Pancreas (tissue), 10 donors: ENCODE measurements at regions of chr7 and their contacts with region 1.

Region 1: DNA sequence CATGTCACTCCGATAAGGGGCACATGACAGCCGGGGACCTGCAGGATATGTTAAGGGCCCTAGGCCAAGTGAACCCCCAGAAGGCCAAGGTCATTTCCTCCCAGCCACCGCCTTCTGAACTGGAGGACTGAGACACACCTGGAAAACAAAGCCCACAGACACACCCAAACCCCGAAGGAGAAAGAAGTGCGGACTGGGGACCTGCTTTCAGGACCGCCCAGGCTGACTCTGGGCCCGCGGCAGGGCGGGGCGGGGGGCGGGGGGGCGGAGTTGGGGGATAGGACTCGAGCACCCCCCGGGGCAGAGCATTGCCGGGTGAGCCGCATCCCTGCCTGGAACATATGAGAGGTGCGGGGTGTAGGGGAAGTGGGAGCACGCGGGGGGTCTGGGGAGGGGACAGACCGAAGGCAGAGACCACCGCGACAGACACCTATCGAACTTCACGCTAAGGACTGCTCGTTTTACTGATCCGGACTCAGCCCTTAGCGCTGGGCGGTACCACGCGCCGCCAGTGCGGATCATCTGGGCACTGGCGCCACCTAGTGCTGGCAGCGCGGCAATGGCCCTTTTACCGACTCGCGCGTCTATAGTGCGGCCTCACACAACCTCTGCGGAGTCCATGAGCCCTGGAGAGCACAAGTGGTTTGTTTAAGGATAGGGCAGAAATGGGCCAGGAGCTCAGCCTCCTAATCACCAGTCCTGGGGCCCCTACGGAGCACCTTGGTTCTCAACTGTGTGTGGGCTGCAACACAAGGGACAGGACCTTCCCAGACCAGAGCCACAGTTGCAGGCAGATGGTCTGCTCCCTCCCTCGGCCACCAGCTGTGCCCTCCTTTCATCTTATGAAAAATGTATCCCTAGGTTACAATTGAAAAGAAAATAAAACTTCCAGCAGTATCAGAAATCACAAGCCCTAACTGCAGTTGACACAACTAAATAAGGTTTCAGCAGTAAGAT is 157.6 kb downstream of the HERPUD2 start:
- DNase-seq: peak; percentile 58 to 94 (median 84)
- ATAC-seq: peak; percentile 99 to 100 (median 100)
- H3K4me3 ChIP-seq: peak overlapping the region in 3 of 4 donors; percentile 31 to 49 (median 39)
- H3K27ac ChIP-seq: no peak overlapping the region
- H3K4me1 ChIP-seq: no peaks in the 10 kb centered on the region
- H3K27me3 ChIP-seq: no peaks in the 10 kb centered on the region
- CTCF ChIP-seq: peak; percentile 84 to 91 (median 88)

Region 2: DNA sequence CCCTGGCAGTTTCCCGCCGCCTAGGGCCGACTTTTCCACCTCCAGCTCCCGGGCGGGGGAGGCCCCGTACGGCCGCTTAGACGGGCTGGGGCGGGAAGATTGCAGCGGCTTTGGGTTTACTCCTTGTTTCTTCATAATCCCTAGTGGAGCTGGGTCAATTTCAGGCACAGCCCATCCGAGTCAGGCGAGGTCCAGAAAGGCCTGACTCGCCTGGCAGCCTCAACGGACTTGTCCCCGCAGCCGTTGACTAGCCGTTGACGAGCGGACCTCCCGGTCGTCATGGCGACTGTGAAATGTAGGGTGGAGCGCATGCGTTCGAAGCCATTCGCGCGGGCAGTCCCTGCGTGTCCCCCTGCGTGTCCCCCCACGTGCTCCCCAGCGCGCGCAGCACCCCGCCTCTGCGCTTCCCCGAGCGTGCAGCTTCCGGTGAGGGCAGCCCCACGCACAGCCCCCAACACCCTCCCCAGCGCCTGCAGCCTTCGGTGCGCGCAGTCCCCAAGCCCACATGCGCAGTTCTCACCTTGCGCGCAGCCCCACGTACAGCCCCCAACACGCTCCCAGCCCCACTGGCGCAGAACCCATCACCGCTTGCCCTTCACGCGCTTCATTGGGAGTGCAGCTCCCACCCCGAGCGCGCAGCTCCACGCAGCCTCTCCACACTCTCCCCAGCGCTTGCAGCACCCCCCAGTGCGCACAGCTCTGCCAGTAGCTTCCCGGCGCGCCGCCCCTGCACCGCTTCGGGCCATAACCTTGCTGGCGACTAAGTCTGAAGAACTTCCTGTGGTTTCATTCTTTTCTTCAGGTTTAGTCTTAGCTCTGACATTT is 351.2 kb before region 1 on chr7:
- intact Hi-C with region 1: loop called in 1 of 3 experiments (anchors 10 kb)
- DNase-seq: peak; percentile 10 to 71 (median 18)
- ATAC-seq: peak; percentile 53 to 83 (median 70)
- H3K4me3 ChIP-seq: peak overlapping the region in 3 of 4 donors; percentile 14 to 47 (median 29)
- H3K27ac ChIP-seq: no peak overlapping the region
- H3K4me1 ChIP-seq: no peaks in the 10 kb centered on the region
- H3K27me3 ChIP-seq: peaks cover 0 to 5% (median 0%) of the 10 kb centered on the region in 4 donors
- CTCF ChIP-seq: no peak

Region 3: GRCh38 chr7:35424869-35425495 is 112.4 kb before region 1 on chr7:
- intact Hi-C with region 1: loop called in 1 of 3 experiments (anchors 10 kb)
- DNase-seq: peak; percentile 32 to 74 (median 64)
- ATAC-seq: peak; percentile 50 to 94 (median 91)
- H3K4me3 ChIP-seq: no peak overlapping the region
- H3K27ac ChIP-seq: no peak overlapping the region
- H3K4me1 ChIP-seq: no peaks in the 10 kb centered on the region
- H3K27me3 ChIP-seq: peaks cover 0 to 5% (median 0%) of the 10 kb centered on the region in 4 donors
- CTCF ChIP-seq: peak; percentile 52 to 76 (median 68)

Region 4: GRCh38 chr7:35753761-35754603 is 216.6 kb after region 1 on chr7:
- intact Hi-C with region 1: no loop called
- DNase-seq: peak in 2 of 6 donors; percentile 5 to 9
- ATAC-seq: peak in 3 of 4 donors; percentile 45 to 58 (median 47)
- H3K4me3 ChIP-seq: no peak overlapping the region
- H3K27ac ChIP-seq: no peak overlapping the region
- H3K4me1 ChIP-seq: no peaks in the 10 kb centered on the region
- H3K27me3 ChIP-seq: no peaks in the 10 kb centered on the region
- CTCF ChIP-seq: no peak